ENCODE measurements at regions of chr4 and their contacts with region 1.

Region 1: GRCh38 chr4:108030332-108030731 is 40.6 kb downstream of the HADH start:
- DNase-seq: peak; percentile 69
- H3K4me3 Mint-ChIP-seq: peak overlapping the region; percentile 43
- H3K27ac Mint-ChIP-seq: peak overlapping the region; percentile 89
- H3K4me1 Mint-ChIP-seq: peaks cover 68% of the 10 kb centered on the region
- H3K27me3 Mint-ChIP-seq: no peaks in the 10 kb centered on the region

Region 2: GRCh38 chr4:108072300-108072699 is 42.0 kb after region 1 on chr4:
- intact Hi-C with region 1: loop called (anchors 2 kb)
- DNase-seq: peak; percentile 58
- H3K4me3 Mint-ChIP-seq: peak overlapping the region; percentile 50
- H3K27ac Mint-ChIP-seq: peak overlapping the region; percentile 81
- H3K4me1 Mint-ChIP-seq: peaks cover 73% of the 10 kb centered on the region
- H3K27me3 Mint-ChIP-seq: no peaks in the 10 kb centered on the region

Region 3: DNA sequence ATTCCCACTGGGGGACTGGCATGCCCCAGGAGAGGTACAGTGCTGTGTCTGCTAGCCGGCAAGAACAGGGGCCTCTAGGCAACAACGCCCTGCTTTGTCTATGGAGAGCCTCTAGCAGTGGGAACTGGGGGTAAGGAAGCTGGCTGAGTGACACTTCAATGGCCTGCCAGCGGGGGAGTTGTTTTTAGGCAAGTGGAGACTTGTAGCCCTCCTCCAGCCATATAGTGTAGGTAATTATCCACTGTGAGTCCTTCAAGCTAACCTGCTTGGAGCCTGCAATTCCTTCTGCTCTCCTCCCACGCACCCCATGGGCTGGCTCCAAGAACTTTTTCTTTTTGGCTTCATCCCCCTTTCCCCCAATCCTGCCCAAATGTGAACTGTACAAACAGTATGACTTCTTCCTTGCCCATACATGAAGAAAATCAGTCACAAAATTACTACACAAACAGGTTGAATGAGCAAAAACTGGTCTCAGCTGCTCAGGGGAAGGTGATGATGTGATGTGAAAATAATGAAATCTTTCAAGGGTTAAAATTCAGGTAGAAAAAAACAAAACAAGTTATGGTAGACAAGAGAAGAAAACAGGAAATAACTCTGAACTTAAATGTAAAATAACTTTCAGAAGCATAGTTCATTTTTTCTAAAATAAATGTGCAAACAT is 105.3 kb after region 1 on chr4:
- intact Hi-C with region 1: loop called (anchors 1 kb)
- DNase-seq: no peak
- H3K4me3 Mint-ChIP-seq: peak overlapping the region; percentile 56
- H3K27ac Mint-ChIP-seq: peak overlapping the region; percentile 87
- H3K4me1 Mint-ChIP-seq: peaks cover 75% of the 10 kb centered on the region
- H3K27me3 Mint-ChIP-seq: no peaks in the 10 kb centered on the region

Region 4: DNA sequence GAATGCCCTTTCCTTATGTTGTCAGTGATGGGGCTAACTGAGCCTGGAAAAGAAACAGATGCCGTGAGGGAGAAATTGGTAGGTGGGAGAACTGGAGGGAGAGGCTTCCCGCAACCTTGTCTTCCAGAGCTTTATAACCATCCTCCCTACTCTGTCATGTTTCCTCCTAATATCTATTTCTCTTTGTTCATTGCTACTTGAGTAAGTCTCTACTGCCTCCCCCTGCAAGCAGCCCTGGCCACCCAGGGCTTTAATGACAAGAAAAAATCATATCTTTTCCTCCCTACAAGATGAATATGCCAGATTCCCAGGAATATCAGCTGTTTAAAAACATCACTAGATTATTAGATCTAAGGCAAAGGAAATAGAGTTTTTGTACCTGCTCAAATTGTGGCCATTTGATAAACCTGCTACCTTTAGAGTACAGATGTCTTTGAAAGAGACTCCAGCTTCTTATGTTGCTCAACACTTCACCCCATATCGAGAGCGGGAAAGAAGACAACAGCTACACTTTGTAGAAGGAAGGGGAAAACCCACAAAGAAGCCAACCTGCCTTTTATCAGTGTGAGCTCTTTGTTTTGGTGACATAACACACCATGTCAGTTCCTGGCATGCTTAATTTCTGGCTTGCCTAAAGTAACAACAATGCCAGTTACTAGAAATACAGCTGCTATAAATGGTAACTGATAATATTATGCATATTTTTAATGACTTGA is 325.0 kb after region 1 on chr4:
- intact Hi-C with region 1: loop called (anchors 5 kb)
- DNase-seq: peak; percentile 54
- H3K4me3 Mint-ChIP-seq: peak overlapping the region; percentile 76
- H3K27ac Mint-ChIP-seq: peak overlapping the region; percentile 30
- H3K4me1 Mint-ChIP-seq: peaks cover 74% of the 10 kb centered on the region
- H3K27me3 Mint-ChIP-seq: peaks cover 5% of the 10 kb centered on the region

Region 5: DNA sequence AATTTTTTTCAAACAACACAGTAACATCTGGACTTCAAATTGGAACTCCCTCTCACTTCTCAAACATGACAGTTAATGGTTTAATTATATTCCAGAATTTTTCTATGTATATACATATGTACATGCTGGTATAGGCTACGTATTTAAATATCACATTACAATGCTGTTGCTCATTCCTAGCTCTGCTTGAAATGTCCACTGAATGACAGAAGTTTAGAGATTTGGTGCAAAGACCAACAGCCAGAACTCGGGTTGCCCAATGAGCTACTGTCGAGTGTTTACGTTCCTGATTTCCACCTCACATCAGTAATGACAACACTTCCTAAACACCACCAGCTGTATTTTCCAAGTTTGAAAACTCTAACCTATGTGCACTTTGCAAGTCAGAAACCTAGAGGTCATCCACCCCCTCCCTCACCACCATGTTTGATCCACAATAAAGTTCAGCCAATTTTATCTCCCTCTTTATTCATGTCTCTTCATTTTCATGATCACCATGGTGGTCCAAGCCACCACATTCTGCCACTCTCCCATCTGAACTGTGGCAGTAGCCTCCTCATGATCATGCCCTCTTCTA is 540.7 kb after region 1 on chr4:
- intact Hi-C with region 1: loop called (anchors 1 kb)
- DNase-seq: no peak
- H3K4me3 Mint-ChIP-seq: no peak overlapping the region
- H3K27ac Mint-ChIP-seq: no peak overlapping the region
- H3K4me1 Mint-ChIP-seq: peaks cover 19% of the 10 kb centered on the region
- H3K27me3 Mint-ChIP-seq: no peaks in the 10 kb centered on the region